ENCODE measurements at regions of chr16 and their contacts with region 1.

Region 1: DNA sequence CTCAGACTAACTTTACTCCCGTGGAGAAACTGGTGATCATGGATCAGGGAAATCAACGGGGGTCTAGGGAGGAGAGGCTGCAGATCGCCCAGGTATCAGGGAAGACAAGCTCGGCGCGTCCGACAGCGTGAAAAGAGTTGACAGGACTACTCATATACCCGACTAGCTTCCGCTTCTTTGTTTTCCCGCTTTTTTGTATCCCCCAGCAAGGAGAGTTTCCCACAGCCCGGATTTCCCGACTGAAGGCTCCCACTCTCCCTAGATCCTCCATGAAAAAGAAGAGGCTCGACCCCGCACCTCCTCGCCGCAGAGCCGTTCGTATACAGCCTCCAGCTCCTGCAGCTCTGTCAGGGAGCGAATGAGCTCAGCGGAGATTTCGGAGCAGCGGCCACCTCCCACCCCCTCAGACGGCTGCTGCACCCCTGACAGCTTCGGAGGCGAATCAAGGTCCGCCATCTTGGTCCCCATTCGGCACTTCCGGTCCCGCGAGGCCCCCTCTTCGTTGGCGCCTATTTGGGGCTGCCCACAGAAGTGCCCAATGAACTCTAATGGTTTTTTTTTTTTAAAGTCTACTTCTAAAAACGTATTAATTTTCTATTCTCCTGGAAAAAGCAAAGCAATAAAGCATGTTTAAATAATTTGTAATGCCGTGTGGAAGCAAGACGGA is at the start of gene COG4:
- DNase-seq: peak; percentile 87 to 93 (median 90)
- ATAC-seq: peak; percentile 85 to 95 (median 92)
- H3K4me3 ChIP-seq: peak within 1 kb of the TSS; percentile 58 to 99 (median 84)
- H3K27ac ChIP-seq: peak within 1 kb of the TSS; percentile 67 to 94 (median 87)
- H3K4me1 ChIP-seq: peaks cover 3 to 61% (median 34%) of the 10 kb centered on the region in 12 donors
- H3K27me3 ChIP-seq: no peaks in the 10 kb centered on the region
- CTCF ChIP-seq: no peak
- POLR2A ChIP-seq: no peak
- total RNA-seq, gene COG4: 30.7 to 45.7 (median 41.7) TPM

Region 2: GRCh38 chr16:70750893-70751475 is 227.8 kb after region 1 on chr16:
- intact Hi-C with region 1: loop called in 1 of 10 experiments (anchors 10 kb)
- DNase-seq: peak; percentile 68 to 85 (median 83)
- ATAC-seq: peak; percentile 45 to 76 (median 68)
- H3K4me3 ChIP-seq: no peak overlapping the region
- H3K27ac ChIP-seq: peak overlapping the region; percentile 27 to 77 (median 58)
- H3K4me1 ChIP-seq: peaks cover 13 to 71% (median 47%) of the 10 kb centered on the region in 12 donors
- H3K27me3 ChIP-seq: no peaks in the 10 kb centered on the region
- CTCF ChIP-seq: no peak
- POLR2A ChIP-seq: no peak

Measured in heart left ventricle (tissue), 16 donors.